Sciatic nerve (tissue), 2 donors: ENCODE measurements at regions of chr20 and their contacts with region 1.

Region 1: GRCh38 chr20:13121840-13122515 is 99.1 kb upstream of the ISM1 start:
- DNase-seq: no peak
- ATAC-seq: no peak

Region 2: DNA sequence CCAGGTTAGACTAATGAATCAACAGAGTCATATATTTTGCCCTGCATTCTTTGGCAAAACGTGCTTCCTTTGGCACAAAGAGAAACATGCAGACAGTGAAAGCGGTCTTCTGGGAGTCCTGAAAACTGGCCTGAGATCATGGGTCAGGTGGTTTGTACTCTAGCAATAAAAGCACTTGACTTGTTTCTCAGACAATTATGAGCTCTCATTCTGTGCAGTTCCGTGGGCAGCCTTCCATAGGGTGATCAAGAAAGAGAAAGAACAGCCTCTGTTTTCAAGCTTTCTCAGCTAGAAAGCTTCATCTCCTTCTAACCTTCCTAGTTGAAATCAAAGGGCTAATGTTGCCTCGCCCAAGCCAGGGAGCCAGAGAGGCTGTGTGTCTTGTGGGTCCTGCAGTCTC is 36.4 kb after region 1 on chr20:
- intact Hi-C with region 1: no loop called
- DNase-seq: no peak
- ATAC-seq: peak; percentile 82

Region 3: GRCh38 chr20:13286607-13287006 is 164.6 kb after region 1 on chr20:
- intact Hi-C with region 1: loop called (anchors 10 kb)
- DNase-seq: no peak
- ATAC-seq: no peak

Region 4: DNA sequence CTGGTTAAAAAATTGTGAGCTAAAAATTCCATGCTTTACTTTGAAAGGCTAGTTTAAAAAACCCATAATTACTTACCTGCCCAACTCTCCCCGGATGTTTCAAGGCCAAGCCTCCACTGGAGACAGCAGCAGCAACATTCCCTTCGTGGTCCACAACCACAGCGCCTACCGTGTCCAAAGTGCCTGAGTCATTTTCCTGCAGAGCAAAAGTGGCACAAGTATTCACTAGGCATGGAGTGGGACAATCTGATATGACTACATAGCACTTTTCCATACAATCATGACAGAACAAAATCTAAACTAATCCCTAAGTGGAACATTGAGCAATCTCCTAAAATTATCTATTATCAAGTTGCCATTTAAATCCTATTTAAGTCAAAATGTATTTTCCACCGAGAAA is 412.0 kb after region 1 on chr20:
- intact Hi-C with region 1: loop called (anchors 10 kb)
- DNase-seq: no peak
- ATAC-seq: no peak